ENCODE measurements at regions of chr12 and their contacts with region 1.

Region 1: GRCh38 chr12:54993161-54993835 is 8.7 kb upstream of the TESPA1 start:
- DNase-seq: peak; percentile 68
- ATAC-seq: peak; percentile 75
- H3K4me3 Mint-ChIP-seq: no peak overlapping the region
- H3K27ac Mint-ChIP-seq: no peak overlapping the region
- H3K4me1 Mint-ChIP-seq: peaks cover 37% of the 10 kb centered on the region
- H3K27me3 Mint-ChIP-seq: no peaks in the 10 kb centered on the region

Region 2: GRCh38 chr12:54658306-54659264 is 334.7 kb before region 1 on chr12:
- CTCF ChIA-PET with region 1: no interaction called
- DNase-seq: peak; percentile 65
- ATAC-seq: peak; percentile 70
- H3K4me3 Mint-ChIP-seq: no peak overlapping the region
- H3K27ac Mint-ChIP-seq: no peak overlapping the region
- H3K4me1 Mint-ChIP-seq: no peaks in the 10 kb centered on the region
- H3K27me3 Mint-ChIP-seq: peaks cover 17% of the 10 kb centered on the region

Region 3: GRCh38 chr12:54723379-54724256 is 269.7 kb before region 1 on chr12:
- CTCF ChIA-PET with region 1: interaction called, 16 read pairs
- DNase-seq: peak; percentile 47
- ATAC-seq: peak; percentile 78
- H3K4me3 Mint-ChIP-seq: no peak overlapping the region
- H3K27ac Mint-ChIP-seq: no peak overlapping the region
- H3K4me1 Mint-ChIP-seq: peaks cover 7% of the 10 kb centered on the region
- H3K27me3 Mint-ChIP-seq: peaks cover 28% of the 10 kb centered on the region

Region 4: DNA sequence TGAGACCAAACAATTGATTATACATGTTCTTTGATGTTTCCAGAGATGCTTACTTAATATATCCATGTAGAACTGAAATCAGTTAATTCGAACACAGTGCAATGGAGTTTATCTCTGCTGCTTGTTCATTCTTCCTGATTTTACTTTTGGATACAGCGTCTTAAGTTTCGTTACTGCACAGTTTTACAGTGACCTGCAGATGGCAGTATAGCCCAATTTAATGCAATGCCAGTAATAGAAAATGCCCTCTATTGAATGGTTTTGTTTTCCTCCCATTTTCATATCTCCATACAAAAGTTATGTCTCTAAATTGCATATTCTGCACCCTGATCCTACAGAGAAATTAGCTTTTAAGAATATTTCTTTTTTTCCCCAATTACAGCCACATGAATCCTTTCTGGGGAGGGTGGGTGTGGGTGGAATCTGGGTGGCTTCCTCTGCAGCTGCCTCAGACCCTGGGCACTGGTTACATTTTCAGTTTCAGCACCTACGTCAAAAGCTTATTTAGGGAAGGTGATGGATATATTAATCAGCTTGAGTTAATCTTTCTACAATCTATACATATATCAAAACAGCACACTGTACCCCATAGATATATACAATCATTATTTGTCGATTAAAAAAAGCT is 244.0 kb before region 1 on chr12:
- CTCF ChIA-PET with region 1: interaction called, 32 read pairs
- DNase-seq: peak; percentile 53
- ATAC-seq: peak; percentile 96
- H3K4me3 Mint-ChIP-seq: peak overlapping the region; percentile 39
- H3K27ac Mint-ChIP-seq: peak overlapping the region; percentile 67
- H3K4me1 Mint-ChIP-seq: peaks cover 21% of the 10 kb centered on the region
- H3K27me3 Mint-ChIP-seq: peaks cover 5% of the 10 kb centered on the region

Region 5: DNA sequence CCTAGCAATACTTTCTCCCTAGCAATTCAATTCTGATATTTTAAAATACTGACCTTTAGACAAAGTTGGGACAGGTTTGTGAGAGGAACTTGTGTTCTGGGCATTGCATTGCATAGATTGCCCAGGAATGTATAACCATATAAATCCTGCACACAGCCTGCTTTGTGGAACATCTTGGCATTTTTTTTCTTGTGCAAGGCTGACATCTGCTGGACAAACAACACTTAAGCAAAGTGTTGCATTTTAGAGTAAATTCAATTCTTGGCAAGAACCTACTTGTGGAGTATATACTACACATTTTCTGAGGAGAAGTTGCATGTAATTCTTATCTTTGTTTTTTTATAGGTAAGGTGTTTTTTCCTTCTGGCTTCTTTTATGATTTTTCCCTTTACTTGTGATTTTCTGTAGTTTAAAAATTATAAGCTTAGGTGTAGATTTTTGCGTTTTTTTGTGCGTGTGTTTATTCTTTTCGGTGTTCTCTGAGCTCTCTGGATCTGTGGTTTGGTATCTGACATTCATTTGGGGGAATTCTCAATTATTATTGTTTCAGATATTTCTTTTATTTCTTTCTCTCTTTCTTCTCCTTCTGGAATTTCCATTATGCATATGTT is 35.1 kb before region 1 on chr12:
- CTCF ChIA-PET with region 1: interaction called, 14 read pairs
- DNase-seq: peak; percentile 61
- ATAC-seq: peak; percentile 49
- H3K4me3 Mint-ChIP-seq: no peak overlapping the region
- H3K27ac Mint-ChIP-seq: no peak overlapping the region
- H3K4me1 Mint-ChIP-seq: peaks cover 44% of the 10 kb centered on the region
- H3K27me3 Mint-ChIP-seq: no peaks in the 10 kb centered on the region

Region 6: DNA sequence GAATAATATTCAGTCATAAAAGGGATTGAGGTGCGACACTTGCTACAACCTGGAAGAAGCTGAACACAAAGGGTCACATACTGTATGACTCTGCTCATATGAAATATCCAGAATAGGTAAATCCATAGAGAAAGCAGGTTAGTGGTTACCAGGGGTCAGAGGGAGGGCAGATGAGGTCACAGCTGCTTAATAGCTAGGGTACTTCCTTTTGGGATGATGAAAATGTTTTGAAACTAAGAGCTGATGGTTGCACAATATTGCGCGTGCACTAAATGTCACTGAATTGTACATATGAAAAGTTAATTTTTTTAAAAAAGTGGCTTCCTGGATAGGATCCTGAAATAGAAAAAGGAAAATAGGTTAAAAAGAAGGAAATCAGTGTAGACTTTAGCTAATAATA is 50.2 kb after region 1 on chr12:
- CTCF ChIA-PET with region 1: interaction called, 10 read pairs
- DNase-seq: no peak
- ATAC-seq: no peak
- H3K4me3 Mint-ChIP-seq: no peak overlapping the region
- H3K27ac Mint-ChIP-seq: no peak overlapping the region
- H3K4me1 Mint-ChIP-seq: no peaks in the 10 kb centered on the region
- H3K27me3 Mint-ChIP-seq: peaks cover 18% of the 10 kb centered on the region

Region 7: GRCh38 chr12:55126106-55126505 is 132.8 kb after region 1 on chr12 and contains the start of gene OR9K2:
- CTCF ChIA-PET with region 1: no interaction called
- DNase-seq: no peak
- ATAC-seq: no peak
- H3K4me3 Mint-ChIP-seq: no peak within 1 kb of the TSS
- H3K27ac Mint-ChIP-seq: no peak within 1 kb of the TSS
- H3K4me1 Mint-ChIP-seq: no peaks in the 10 kb centered on the region
- H3K27me3 Mint-ChIP-seq: peaks cover 29% of the 10 kb centered on the region
- total RNA-seq, gene OR9K2: not detected